Activated naive CD8-positive, alpha-beta T cell treated with anti-CD3 and anti-CD28 coated beads, Interleukin-2, amount 10 ng/mL, durations not matched to agents 7 days and 5 days (primary cell): ENCODE measurements at regions of chr6 and their contacts with region 1.

Region 1: DNA sequence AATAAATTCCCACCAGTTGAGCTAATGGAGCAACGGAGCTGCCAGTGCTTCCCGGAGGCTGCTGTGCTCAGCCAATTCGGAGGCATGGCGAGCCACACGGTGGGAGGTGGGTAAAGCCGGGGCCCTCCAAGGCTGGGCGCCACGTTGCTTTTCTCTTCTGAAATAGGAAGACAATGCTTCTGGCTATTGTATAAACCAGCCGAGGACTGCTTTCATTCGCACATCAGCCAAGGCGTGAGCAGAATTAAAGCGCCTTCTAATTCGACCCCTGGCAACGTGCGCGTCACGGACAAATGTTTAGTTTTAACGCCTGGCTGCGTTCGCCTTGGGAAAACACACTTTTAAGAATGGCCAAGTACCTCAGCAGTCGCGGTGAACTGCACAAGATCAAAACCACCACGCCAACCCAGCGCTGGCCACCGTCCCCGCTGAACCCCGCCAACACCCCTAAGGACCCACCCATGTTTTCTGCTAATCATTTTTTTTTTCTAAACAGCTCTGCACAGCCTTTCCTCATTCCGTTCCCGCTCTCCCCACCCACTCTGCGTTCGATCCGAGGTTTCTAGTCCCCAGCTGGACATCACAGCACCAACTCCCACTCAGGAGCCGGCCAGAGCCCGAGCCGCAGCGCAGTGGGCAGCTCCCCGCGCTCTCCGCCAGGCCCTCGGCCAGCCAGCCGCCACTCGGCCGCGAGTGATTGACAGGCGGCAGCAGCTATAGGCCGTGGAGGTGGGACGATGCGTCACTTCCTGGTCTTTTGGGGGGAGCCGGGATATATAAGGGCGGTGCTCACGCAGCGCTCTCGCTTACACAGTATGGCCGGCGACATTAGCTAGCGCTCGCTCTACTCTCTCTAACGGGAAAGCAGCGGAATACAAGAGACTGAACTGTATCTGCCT is at the start of gene AMD1:
- DNase-seq: peak; percentile 91
- ATAC-seq: peak; percentile 75
- H3K4me3 Mint-ChIP-seq: peak within 1 kb of the TSS; percentile 93
- H3K27ac Mint-ChIP-seq: peak within 1 kb of the TSS; percentile 97
- H3K4me1 Mint-ChIP-seq: peaks cover 18% of the 10 kb centered on the region
- H3K27me3 Mint-ChIP-seq: no peaks in the 10 kb centered on the region
- total RNA-seq, gene AMD1: 60.0 to 61.2 TPM

Region 2: GRCh38 chr6:110688661-110689268 is 185.5 kb before region 1 on chr6:
- POLR2A ChIA-PET with region 1: interaction called, 22 read pairs
- DNase-seq: peak; percentile 32
- ATAC-seq: peak; percentile 50
- H3K4me3 Mint-ChIP-seq: no peak overlapping the region
- H3K27ac Mint-ChIP-seq: peak overlapping the region; percentile 61
- H3K4me1 Mint-ChIP-seq: peaks cover 24% of the 10 kb centered on the region
- H3K27me3 Mint-ChIP-seq: no peaks in the 10 kb centered on the region

Region 3: GRCh38 chr6:110841266-110841665 is 33.0 kb before region 1 on chr6:
- POLR2A ChIA-PET with region 1: no interaction called
- DNase-seq: no peak
- ATAC-seq: no peak
- H3K4me3 Mint-ChIP-seq: no peak overlapping the region
- H3K27ac Mint-ChIP-seq: no peak overlapping the region
- H3K4me1 Mint-ChIP-seq: no peaks in the 10 kb centered on the region
- H3K27me3 Mint-ChIP-seq: no peaks in the 10 kb centered on the region

Region 4: DNA sequence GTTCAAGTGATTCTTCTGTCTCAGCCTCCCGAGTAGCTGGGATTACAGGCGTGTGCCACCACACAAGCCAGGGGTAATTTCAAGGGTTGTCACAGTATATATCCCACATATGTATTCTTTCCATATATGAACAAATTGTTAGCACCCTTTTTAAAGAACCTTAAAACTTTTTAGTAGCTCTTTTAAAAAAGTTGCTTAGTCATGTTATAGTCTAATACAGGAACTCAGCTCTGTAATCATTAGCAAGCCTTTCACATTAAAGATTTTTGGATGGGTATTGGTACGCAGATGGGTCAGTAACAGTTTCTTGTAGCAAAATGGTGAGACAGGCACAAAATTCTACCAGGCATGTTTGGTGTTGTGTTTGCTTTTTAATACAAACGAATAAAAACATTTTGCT is 11.3 kb after region 1 on chr6:
- POLR2A ChIA-PET with region 1: interaction called, 23 read pairs
- DNase-seq: no peak
- ATAC-seq: no peak
- H3K4me3 Mint-ChIP-seq: no peak overlapping the region
- H3K27ac Mint-ChIP-seq: no peak overlapping the region
- H3K4me1 Mint-ChIP-seq: peaks cover 40% of the 10 kb centered on the region
- H3K27me3 Mint-ChIP-seq: no peaks in the 10 kb centered on the region

Region 5: GRCh38 chr6:110933912-110934311 is 59.7 kb after region 1 on chr6:
- POLR2A ChIA-PET with region 1: no interaction called
- DNase-seq: no peak
- ATAC-seq: no peak
- H3K4me3 Mint-ChIP-seq: no peak overlapping the region
- H3K27ac Mint-ChIP-seq: no peak overlapping the region
- H3K4me1 Mint-ChIP-seq: peaks cover 6% of the 10 kb centered on the region
- H3K27me3 Mint-ChIP-seq: no peaks in the 10 kb centered on the region

Region 6: DNA sequence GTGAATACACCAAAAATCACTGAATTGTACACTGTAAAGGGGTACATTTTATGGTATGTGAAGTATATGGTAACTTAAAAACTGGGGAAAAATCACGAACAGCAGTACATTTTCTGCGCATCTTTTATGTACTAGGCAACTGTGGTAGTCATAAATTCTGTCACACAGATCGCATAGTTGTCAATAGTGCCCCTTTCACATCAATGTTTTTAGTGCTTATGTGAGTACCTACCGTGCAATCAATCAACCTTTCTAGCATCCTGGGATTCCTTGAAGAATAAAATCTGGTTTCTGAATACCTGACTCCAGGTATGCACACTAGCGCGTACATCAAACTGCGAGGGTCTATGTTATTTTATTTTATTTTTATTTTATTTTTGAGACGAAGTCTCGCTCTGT is 107.0 kb after region 1 on chr6:
- POLR2A ChIA-PET with region 1: interaction called, 12 read pairs
- DNase-seq: no peak
- ATAC-seq: no peak
- H3K4me3 Mint-ChIP-seq: peak overlapping the region; percentile 97
- H3K27ac Mint-ChIP-seq: peak overlapping the region; percentile 99
- H3K4me1 Mint-ChIP-seq: peaks cover 24% of the 10 kb centered on the region
- H3K27me3 Mint-ChIP-seq: no peaks in the 10 kb centered on the region